Caco-2 (cell line): ENCODE measurements at regions of chr15 and their contacts with region 1.

Region 1: DNA sequence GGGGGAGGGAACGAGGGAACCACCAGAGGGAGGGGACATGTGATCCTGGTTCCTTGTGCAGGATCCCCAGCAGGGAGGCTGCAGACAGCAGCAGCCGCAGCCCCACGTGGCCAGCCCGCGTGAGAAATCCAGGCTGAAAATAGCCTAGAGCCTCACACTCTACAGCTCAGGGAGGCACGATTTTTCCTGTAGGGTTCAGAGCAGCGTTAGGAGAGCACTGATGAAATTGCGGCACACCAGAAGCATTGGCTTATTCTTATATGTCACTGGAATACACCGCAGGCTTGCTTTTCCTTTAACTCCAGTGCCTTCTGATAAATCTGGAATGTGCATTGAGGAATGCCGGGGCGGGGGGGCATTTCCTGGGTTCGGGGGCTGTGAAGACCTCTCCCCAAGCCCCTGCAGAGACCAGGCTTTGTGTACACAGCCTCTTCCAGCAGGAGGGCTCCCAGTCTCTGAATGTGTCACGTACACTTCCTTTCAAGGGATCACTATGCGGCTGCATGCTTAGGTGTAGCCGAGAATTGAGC is 193.0 kb downstream of the ATP10A start:
- DNase-seq: peak in 1 of 2 experiments; percentile 19
- H3K4me3 ChIP-seq: peak overlapping the region; percentile 2; the same call in 1 of the 2 replicates
- H3K4me3 Mint-ChIP-seq: peak overlapping the region; percentile 59
- H3K27ac Mint-ChIP-seq: peak overlapping the region; percentile 69
- H3K4me1 ChIP-seq: peaks cover 9% of the 10 kb centered on the region; the same call in 1 of the 2 replicates
- H3K4me1 Mint-ChIP-seq: peaks cover 10% of the 10 kb centered on the region
- H3K27me3 ChIP-seq: no peaks in the 10 kb centered on the region
- H3K27me3 Mint-ChIP-seq: no peaks in the 10 kb centered on the region
- CTCF ChIP-seq: no peak

Region 2: GRCh38 chr15:25609371-25609770 is 60.7 kb before region 1 on chr15:
- CTCF ChIA-PET with region 1: no interaction called
- POLR2A ChIA-PET with region 1: no interaction called
- intact Hi-C with region 1: loop called (anchors 5 kb)
- DNase-seq: no peak
- H3K4me3 ChIP-seq: no peak overlapping the region
- H3K4me3 Mint-ChIP-seq: no peak overlapping the region
- H3K27ac Mint-ChIP-seq: no peak overlapping the region
- H3K4me1 ChIP-seq: peaks cover 12% of the 10 kb centered on the region
- H3K4me1 Mint-ChIP-seq: peaks cover 7% of the 10 kb centered on the region
- H3K27me3 ChIP-seq: no peaks in the 10 kb centered on the region
- H3K27me3 Mint-ChIP-seq: no peaks in the 10 kb centered on the region
- CTCF ChIP-seq: no peak

Region 3: GRCh38 chr15:25727867-25728600 is 57.9 kb after region 1 on chr15:
- CTCF ChIA-PET with region 1: no interaction called
- POLR2A ChIA-PET with region 1: no interaction called
- intact Hi-C with region 1: no loop called
- DNase-seq: no peak
- H3K4me3 ChIP-seq: no peak overlapping the region
- H3K4me3 Mint-ChIP-seq: no peak overlapping the region
- H3K27ac Mint-ChIP-seq: no peak overlapping the region
- H3K4me1 ChIP-seq: no peaks in the 10 kb centered on the region
- H3K4me1 Mint-ChIP-seq: no peaks in the 10 kb centered on the region
- H3K27me3 ChIP-seq: no peaks in the 10 kb centered on the region
- H3K27me3 Mint-ChIP-seq: peaks cover 1% of the 10 kb centered on the region
- CTCF ChIP-seq: no peak